Left ventricle myocardium inferior (tissue), 1 donor: ENCODE measurements at regions of chr20 and their contacts with region 1.

Region 1: DNA sequence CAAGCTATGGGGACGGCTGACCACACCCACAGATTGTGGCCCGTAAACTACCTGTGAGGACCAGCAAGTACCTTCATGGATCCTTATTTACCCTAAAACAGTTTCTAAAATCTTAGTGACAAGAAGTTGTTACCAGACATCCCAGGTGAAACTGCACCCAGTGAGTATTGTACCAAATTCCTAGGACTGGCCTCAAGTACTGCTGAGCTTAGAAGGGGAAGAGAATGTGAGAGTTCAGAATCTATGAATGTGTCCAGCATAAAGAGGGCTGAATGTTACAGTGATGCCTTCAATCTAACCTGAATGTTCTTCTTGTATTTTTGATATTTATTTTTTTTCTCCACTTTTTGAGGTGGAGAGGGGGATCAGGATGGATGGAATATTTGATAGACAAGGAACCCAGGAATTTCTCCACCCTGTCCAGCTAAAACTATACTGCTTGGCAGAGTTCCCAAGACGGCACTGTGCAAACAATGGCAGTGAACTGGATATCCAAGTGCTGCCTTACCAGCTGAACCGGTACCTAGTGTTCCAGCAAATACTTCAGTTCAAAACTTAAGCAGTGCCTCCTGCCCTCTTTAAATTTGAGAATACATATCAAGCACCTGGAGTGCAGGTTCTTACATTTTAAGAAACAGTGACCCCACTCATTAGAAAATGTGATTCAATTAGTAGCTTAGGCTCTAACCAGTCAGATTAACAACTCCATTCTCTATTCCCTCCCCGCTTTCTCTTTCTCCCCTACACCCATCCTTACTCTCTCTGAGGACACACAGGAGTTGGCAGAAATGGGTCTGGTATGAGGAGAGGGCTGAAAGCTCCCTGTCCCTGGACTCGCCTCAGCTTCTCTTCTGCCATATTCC is 427.3 kb upstream of the FLRT3 start:
- DNase-seq: no peak
- H3K4me3 ChIP-seq: no peak overlapping the region
- H3K27ac ChIP-seq: no peak overlapping the region
- H3K4me1 ChIP-seq: no peaks in the 10 kb centered on the region
- H3K27me3 ChIP-seq: no peaks in the 10 kb centered on the region
- CTCF ChIP-seq: no peak

Region 2: DNA sequence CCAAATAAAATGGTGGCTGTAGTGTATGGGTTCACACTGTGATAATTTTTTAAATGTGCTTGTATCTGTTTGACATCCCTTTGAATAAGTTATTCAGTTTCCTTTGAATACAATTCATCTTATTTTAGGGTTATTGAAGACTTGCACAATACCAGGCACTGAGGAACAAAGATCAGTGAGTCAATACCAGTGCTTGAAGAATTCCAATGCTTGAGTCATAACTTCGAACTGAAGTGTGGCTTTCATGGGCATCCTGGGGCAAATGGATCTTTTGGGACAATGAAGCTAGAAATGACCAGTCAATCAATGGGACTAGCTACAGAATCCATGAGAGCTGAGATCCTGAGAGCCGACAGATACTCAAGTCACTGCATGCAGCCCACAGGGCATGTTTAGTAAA is 77.4 kb before region 1 on chr20:
- intact Hi-C with region 1: no loop called
- DNase-seq: no peak
- H3K4me3 ChIP-seq: no peak overlapping the region
- H3K27ac ChIP-seq: no peak overlapping the region
- H3K4me1 ChIP-seq: no peaks in the 10 kb centered on the region
- H3K27me3 ChIP-seq: no peaks in the 10 kb centered on the region
- CTCF ChIP-seq: no peak

Region 3: GRCh38 chr20:14712302-14712739 is 52.4 kb before region 1 on chr20:
- intact Hi-C with region 1: loop called (anchors 5 kb)
- DNase-seq: no peak
- H3K4me3 ChIP-seq: no peak overlapping the region
- H3K27ac ChIP-seq: no peak overlapping the region
- H3K4me1 ChIP-seq: no peaks in the 10 kb centered on the region
- H3K27me3 ChIP-seq: no peaks in the 10 kb centered on the region
- CTCF ChIP-seq: no peak

Region 4: GRCh38 chr20:14829906-14830305 is 65.2 kb after region 1 on chr20:
- intact Hi-C with region 1: no loop called
- DNase-seq: no peak
- H3K4me3 ChIP-seq: no peak overlapping the region
- H3K27ac ChIP-seq: no peak overlapping the region
- H3K4me1 ChIP-seq: no peaks in the 10 kb centered on the region
- H3K27me3 ChIP-seq: no peaks in the 10 kb centered on the region
- CTCF ChIP-seq: no peak